ENCODE measurements at regions of chr16 and their contacts with region 1.

Region 1: GRCh38 chr16:27449434-27450195 is 47.6 kb downstream of the IL21R start:
- DNase-seq: peak; percentile 83 to 94 (median 87)
- H3K4me3 ChIP-seq: peak overlapping the region; percentile 0
- H3K4me3 Mint-ChIP-seq: peak overlapping the region; percentile 61 to 93 (median 88)
- H3K27ac ChIP-seq: peak overlapping the region; percentile 74
- H3K27ac Mint-ChIP-seq: peak overlapping the region; percentile 97 to 100 (median 100)
- H3K4me1 ChIP-seq: peaks cover 80% of the 10 kb centered on the region
- H3K4me1 Mint-ChIP-seq: peaks cover 85 to 92% (median 88%) of the 10 kb centered on the region in 3 donors
- H3K27me3 ChIP-seq: no peaks in the 10 kb centered on the region
- H3K27me3 Mint-ChIP-seq: peaks cover 0 to 9% of the 10 kb centered on the region in 2 donors

Region 2: GRCh38 chr16:27408012-27408601 is 41.5 kb before region 1 on chr16:
- CTCF ChIA-PET with region 1: interaction called, 16 read pairs
- POLR2A ChIA-PET with region 1: interaction called, 33 read pairs
- DNase-seq: peak in 3 of 5 donors; percentile 27 to 64 (median 35)
- H3K4me3 ChIP-seq: peak overlapping the region; percentile 6
- H3K4me3 Mint-ChIP-seq: peak overlapping the region; percentile 71 to 100 (median 99)
- H3K27ac ChIP-seq: peak overlapping the region; percentile 2
- H3K27ac Mint-ChIP-seq: peak overlapping the region; percentile 91 to 100 (median 98)
- H3K4me1 ChIP-seq: peaks cover 70% of the 10 kb centered on the region
- H3K4me1 Mint-ChIP-seq: peaks cover 84 to 95% (median 93%) of the 10 kb centered on the region in 3 donors
- H3K27me3 ChIP-seq: no peaks in the 10 kb centered on the region
- H3K27me3 Mint-ChIP-seq: peaks cover 0 to 7% of the 10 kb centered on the region in 2 donors

Region 3: GRCh38 chr16:27426423-27427408 is 22.9 kb before region 1 on chr16:
- CTCF ChIA-PET with region 1: interaction called, 10 read pairs
- POLR2A ChIA-PET with region 1: no interaction called
- DNase-seq: peak; percentile 50 to 88 (median 67)
- H3K4me3 ChIP-seq: no peak overlapping the region
- H3K4me3 Mint-ChIP-seq: peak overlapping the region in 5 of 7 donors; percentile 4 to 58 (median 36)
- H3K27ac ChIP-seq: peak overlapping the region; percentile 1
- H3K27ac Mint-ChIP-seq: peak overlapping the region; percentile 77 to 98 (median 92)
- H3K4me1 ChIP-seq: peaks cover 22% of the 10 kb centered on the region
- H3K4me1 Mint-ChIP-seq: peaks cover 39 to 65% (median 59%) of the 10 kb centered on the region in 3 donors
- H3K27me3 ChIP-seq: no peaks in the 10 kb centered on the region
- H3K27me3 Mint-ChIP-seq: peaks cover 0 to 1% of the 10 kb centered on the region in 2 donors

Region 4: GRCh38 chr16:27461483-27462171 is 12.0 kb after region 1 on chr16:
- CTCF ChIA-PET with region 1: interaction called, 12 read pairs
- POLR2A ChIA-PET with region 1: interaction called, 8 read pairs
- DNase-seq: no peak
- H3K4me3 ChIP-seq: no peak overlapping the region
- H3K4me3 Mint-ChIP-seq: peak overlapping the region in 6 of 7 donors; percentile 26 to 91 (median 45)
- H3K27ac ChIP-seq: no peak overlapping the region
- H3K27ac Mint-ChIP-seq: peak overlapping the region; percentile 53 to 99 (median 85)
- H3K4me1 ChIP-seq: peaks cover 74% of the 10 kb centered on the region
- H3K4me1 Mint-ChIP-seq: peaks cover 55 to 95% (median 61%) of the 10 kb centered on the region in 3 donors
- H3K27me3 ChIP-seq: no peaks in the 10 kb centered on the region
- H3K27me3 Mint-ChIP-seq: peaks cover 0 to 5% of the 10 kb centered on the region in 2 donors

Region 5: DNA sequence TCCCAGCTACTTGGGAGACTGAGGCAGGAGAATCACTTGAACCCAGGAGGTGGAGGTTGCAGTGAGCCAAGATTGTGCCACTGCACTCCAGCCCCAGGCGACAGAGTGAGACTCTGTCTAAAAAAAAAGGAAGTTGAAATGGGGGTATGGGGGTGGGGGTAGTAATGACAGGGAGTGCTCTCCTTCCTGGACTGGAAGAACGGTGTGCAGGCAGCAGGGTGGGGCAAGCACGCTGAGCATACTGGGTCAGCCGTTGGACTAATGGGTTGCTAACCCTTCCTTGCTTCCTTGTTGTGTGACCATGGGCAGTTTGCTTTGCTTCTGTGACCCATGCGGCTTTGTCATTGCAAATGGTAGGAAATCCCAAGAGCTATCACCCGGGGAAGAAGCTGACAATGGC is 116.8 kb after region 1 on chr16:
- CTCF ChIA-PET with region 1: no interaction called
- POLR2A ChIA-PET with region 1: no interaction called
- DNase-seq: no peak
- H3K4me3 ChIP-seq: no peak overlapping the region
- H3K4me3 Mint-ChIP-seq: no peak overlapping the region
- H3K27ac ChIP-seq: peak overlapping the region; percentile 27
- H3K27ac Mint-ChIP-seq: peak overlapping the region in 2 of 8 donors; percentile 45 to 88
- H3K4me1 ChIP-seq: no peaks in the 10 kb centered on the region
- H3K4me1 Mint-ChIP-seq: no peaks in the 10 kb centered on the region
- H3K27me3 ChIP-seq: no peaks in the 10 kb centered on the region
- H3K27me3 Mint-ChIP-seq: no peaks in the 10 kb centered on the region

Measured in CD8-positive, alpha-beta memory T cell (primary cell).